Mammary epithelial cell (primary cell): ENCODE measurements at regions of chr2 and their contacts with region 1.

Region 1: GRCh38 chr2:144162652-144163051 is 357.3 kb downstream of the ZEB2 start:
- DNase-seq: peak; percentile 29
- H3K4me3 ChIP-seq: no peak overlapping the region
- H3K27ac ChIP-seq: no peak overlapping the region
- H3K4me1 ChIP-seq: no peaks in the 10 kb centered on the region
- H3K27me3 ChIP-seq: no peaks in the 10 kb centered on the region
- CTCF ChIP-seq: peak; percentile 68 to 77

Region 2: GRCh38 chr2:143974262-143974661 is 188.4 kb before region 1 on chr2:
- CTCF ChIA-PET with region 1: no interaction called
- dilution Hi-C with region 1: no loop called
- in situ Hi-C with region 1: no loop called
- intact Hi-C with region 1: no loop called
- DNase-seq: no peak
- H3K4me3 ChIP-seq: no peak overlapping the region
- H3K27ac ChIP-seq: no peak overlapping the region
- H3K4me1 ChIP-seq: no peaks in the 10 kb centered on the region
- H3K27me3 ChIP-seq: no peaks in the 10 kb centered on the region
- CTCF ChIP-seq: no peak

Region 3: DNA sequence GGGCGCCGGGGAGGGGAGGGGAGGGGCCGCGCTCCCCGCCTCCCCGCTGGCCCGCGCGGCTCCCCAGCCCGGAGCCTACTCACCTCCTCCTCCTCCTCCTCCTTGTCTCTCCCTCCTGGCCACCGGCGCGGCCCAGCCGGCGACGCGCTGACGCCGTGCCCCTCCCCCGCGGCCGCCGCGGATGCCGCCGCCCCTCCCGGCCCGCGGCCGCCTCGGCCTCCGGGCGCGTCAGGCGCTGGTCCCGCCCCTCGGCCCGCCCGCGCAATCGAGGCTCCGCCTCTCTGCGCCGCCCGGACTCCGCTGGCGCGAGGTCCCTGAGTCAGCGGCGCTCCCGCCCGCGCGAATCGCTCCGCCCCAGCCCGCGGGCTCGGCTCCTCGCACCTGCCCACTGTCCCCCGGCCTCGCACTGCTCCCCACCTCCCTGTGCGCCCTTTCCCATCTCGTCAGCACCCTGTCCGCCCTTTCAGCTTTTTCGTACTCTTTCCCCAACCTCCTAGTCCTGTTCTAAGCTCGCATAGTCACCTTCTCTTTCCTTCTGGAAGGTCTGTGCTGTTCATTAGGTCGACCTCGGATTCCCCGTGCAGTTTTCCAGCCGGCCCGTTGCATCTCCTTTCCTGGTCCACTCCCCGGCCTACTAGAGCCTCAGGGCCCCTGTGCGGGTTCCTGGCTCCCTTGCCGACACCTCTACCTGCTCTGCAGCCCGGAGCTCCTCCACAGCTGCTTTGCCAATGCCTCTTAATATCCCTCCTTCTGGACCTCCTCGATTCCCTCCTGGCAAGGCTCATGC is 169.9 kb after region 1 on chr2:
- CTCF ChIA-PET with region 1: no interaction called
- dilution Hi-C with region 1: no loop called
- in situ Hi-C with region 1: no loop called
- intact Hi-C with region 1: loop called (anchors 10 kb)
- DNase-seq: peak; percentile 85
- H3K4me3 ChIP-seq: peak overlapping the region; percentile 49 to 91 (median 77)
- H3K27ac ChIP-seq: peak overlapping the region; percentile 73
- H3K4me1 ChIP-seq: peaks cover 10% of the 10 kb centered on the region
- H3K27me3 ChIP-seq: no peaks in the 10 kb centered on the region
- CTCF ChIP-seq: no peak

Region 4: GRCh38 chr2:144516981-144517865 is 354.6 kb after region 1 on chr2:
- CTCF ChIA-PET with region 1: no interaction called
- dilution Hi-C with region 1: no loop called
- in situ Hi-C with region 1: no loop called
- intact Hi-C with region 1: loop called (anchors 10 kb)
- DNase-seq: peak; percentile 68
- H3K4me3 ChIP-seq: peak overlapping the region; percentile 71 to 90 (median 74)
- H3K27ac ChIP-seq: no peak overlapping the region
- H3K4me1 ChIP-seq: peaks cover 14% of the 10 kb centered on the region
- H3K27me3 ChIP-seq: peaks cover 65% of the 10 kb centered on the region
- CTCF ChIP-seq: no peak

Region 5: DNA sequence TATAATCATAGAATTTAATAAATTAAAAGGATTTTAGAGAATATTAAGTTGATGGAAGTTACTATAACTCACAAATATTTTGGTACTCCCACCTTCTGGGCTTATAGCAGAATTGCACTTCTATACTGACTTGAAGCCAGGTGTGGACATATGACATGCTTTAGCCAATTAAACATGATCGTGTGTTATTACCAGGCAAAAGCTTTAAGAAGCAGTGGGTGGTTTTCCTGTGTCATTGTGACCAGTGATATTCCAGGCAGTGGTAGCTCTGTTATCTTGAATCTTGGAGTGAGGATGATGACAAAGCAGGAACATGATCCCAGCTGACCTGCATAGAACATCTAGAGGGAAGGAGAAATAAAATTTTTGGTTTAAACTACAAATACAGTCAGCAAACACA is 728.2 kb after region 1 on chr2:
- CTCF ChIA-PET with region 1: no interaction called
- dilution Hi-C with region 1: no loop called
- in situ Hi-C with region 1: no loop called
- intact Hi-C with region 1: loop called (anchors 10 kb)
- DNase-seq: peak; percentile 40
- H3K4me3 ChIP-seq: no peak overlapping the region
- H3K27ac ChIP-seq: no peak overlapping the region
- H3K4me1 ChIP-seq: no peaks in the 10 kb centered on the region
- H3K27me3 ChIP-seq: no peaks in the 10 kb centered on the region
- CTCF ChIP-seq: peak; percentile 27 to 46

Region 6: DNA sequence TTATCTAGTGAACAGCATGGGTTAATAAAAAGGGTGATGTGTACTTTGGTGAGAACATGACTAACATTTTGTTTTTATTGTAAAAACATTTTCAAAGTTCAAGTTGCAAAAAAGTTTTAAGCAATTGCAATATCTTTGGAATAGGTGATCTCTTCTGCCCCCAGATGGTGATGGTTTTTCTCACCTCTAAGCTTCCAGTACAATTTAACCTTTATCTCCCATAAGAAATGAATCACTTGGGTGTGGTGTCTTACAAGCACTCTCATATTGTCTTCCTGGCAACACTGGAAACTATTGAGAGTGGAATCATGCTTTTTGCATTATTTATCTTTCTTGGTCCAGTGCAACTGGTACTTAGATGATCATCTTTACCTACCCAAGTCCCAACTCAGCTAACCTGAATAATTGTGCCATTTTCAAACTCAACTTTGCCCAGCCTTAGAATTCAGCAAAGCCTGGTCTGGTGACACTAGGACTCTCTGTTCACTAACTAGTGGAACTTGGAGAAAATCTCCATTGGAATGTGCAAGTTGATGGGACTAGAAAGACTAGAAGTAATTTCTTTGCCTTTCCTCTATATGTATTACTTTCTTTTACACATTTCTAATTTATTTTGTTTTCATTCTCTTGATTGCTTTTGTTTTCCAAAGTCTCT is 1321.9 kb after region 1 on chr2:
- CTCF ChIA-PET with region 1: no interaction called
- dilution Hi-C with region 1: no loop called
- in situ Hi-C with region 1: no loop called
- intact Hi-C with region 1: loop called (anchors 5 kb)
- DNase-seq: peak; percentile 84
- H3K4me3 ChIP-seq: no peak overlapping the region
- H3K27ac ChIP-seq: peak overlapping the region; percentile 24
- H3K4me1 ChIP-seq: peaks cover 7% of the 10 kb centered on the region
- H3K27me3 ChIP-seq: no peaks in the 10 kb centered on the region
- CTCF ChIP-seq: peak; percentile 44 to 57

Region 7: GRCh38 chr2:145752091-145752806 is 1589.6 kb after region 1 on chr2:
- CTCF ChIA-PET with region 1: no interaction called
- dilution Hi-C with region 1: no loop called
- in situ Hi-C with region 1: no loop called
- intact Hi-C with region 1: loop called (anchors 1 kb)
- DNase-seq: peak; percentile 65
- H3K4me3 ChIP-seq: no peak overlapping the region
- H3K27ac ChIP-seq: no peak overlapping the region
- H3K4me1 ChIP-seq: peaks cover 14% of the 10 kb centered on the region
- H3K27me3 ChIP-seq: no peaks in the 10 kb centered on the region
- CTCF ChIP-seq: peak; percentile 73 to 77